Activated naive CD4-positive, alpha-beta T cell treated with anti-CD3 and anti-CD28 coated beads for 36 hours (primary cell): ENCODE measurements at regions of chr3 and their contacts with region 1.

Region 1: GRCh38 chr3:10263646-10264363 is 15.5 kb downstream of the TATDN2 start:
- DNase-seq: peak; percentile 81
- H3K4me3 Mint-ChIP-seq: peak overlapping the region; percentile 71
- H3K27ac Mint-ChIP-seq: peak overlapping the region; percentile 88
- H3K4me1 Mint-ChIP-seq: peaks cover 81% of the 10 kb centered on the region
- H3K27me3 Mint-ChIP-seq: no peaks in the 10 kb centered on the region

Region 2: GRCh38 chr3:10164546-10165393 is 99.0 kb before region 1 on chr3 and contains the start of gene IRAK2:
- CTCF ChIA-PET with region 1: interaction called, 19 read pairs
- intact Hi-C with region 1: no loop called
- DNase-seq: peak; percentile 62
- H3K4me3 Mint-ChIP-seq: peak within 1 kb of the TSS; percentile 75
- H3K27ac Mint-ChIP-seq: no peak within 1 kb of the TSS
- H3K4me1 Mint-ChIP-seq: peaks cover 23% of the 10 kb centered on the region
- H3K27me3 Mint-ChIP-seq: no peaks in the 10 kb centered on the region
- total RNA-seq, gene IRAK2: 6.4 to 6.9 TPM

Region 3: GRCh38 chr3:10253731-10254130 is 10.1 kb before region 1 on chr3:
- CTCF ChIA-PET with region 1: interaction called, 14 read pairs
- intact Hi-C with region 1: loop called (anchors 1 kb)
- DNase-seq: no peak
- H3K4me3 Mint-ChIP-seq: no peak overlapping the region
- H3K27ac Mint-ChIP-seq: peak overlapping the region; percentile 65
- H3K4me1 Mint-ChIP-seq: peaks cover 73% of the 10 kb centered on the region
- H3K27me3 Mint-ChIP-seq: no peaks in the 10 kb centered on the region

Region 4: GRCh38 chr3:10280177-10280529 is 16.3 kb after region 1 on chr3:
- CTCF ChIA-PET with region 1: interaction called, 20 read pairs
- intact Hi-C with region 1: no loop called
- DNase-seq: peak; percentile 38
- H3K4me3 Mint-ChIP-seq: no peak overlapping the region
- H3K27ac Mint-ChIP-seq: no peak overlapping the region
- H3K4me1 Mint-ChIP-seq: peaks cover 59% of the 10 kb centered on the region
- H3K27me3 Mint-ChIP-seq: no peaks in the 10 kb centered on the region

Region 5: GRCh38 chr3:10286596-10287330 is 23.0 kb after region 1 on chr3:
- CTCF ChIA-PET with region 1: interaction called, 20 read pairs
- intact Hi-C with region 1: no loop called
- DNase-seq: peak; percentile 67
- H3K4me3 Mint-ChIP-seq: no peak overlapping the region
- H3K27ac Mint-ChIP-seq: no peak overlapping the region
- H3K4me1 Mint-ChIP-seq: peaks cover 41% of the 10 kb centered on the region
- H3K27me3 Mint-ChIP-seq: no peaks in the 10 kb centered on the region